ENCODE measurements at regions of chr11 and their contacts with region 1.

Region 1: DNA sequence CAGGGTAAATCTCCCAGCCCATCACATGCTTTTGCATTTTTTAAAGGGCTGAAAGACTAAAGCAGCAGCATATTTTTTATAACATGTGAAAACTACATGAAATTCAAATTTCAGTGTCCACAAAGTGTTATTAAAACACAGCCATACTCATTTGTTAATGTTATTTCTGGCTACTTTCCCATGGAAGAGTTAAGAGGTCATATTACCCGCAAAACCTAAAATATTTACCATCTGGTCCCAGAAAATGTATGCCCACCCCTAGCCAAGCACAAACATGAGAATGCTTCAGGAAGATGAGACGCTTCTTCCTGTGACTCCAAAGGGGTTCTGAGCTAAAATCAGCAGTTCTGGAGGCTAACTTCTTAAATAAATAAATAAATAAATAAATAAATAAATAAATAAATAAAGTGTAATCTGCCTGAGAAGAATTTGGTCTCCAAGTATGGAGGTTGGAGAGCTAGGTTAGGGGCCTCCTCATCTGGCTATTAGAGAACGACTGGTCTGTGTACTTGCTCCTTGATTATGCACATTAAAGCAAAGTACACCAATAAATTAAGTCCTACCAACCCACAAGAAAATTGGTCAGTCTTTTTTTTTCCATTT is 9.7 kb downstream of the IMMP1L start:
- DNase-seq: no peak
- H3K4me3 ChIP-seq: no peak overlapping the region
- H3K27ac ChIP-seq: no peak overlapping the region
- H3K4me1 ChIP-seq: no peaks in the 10 kb centered on the region
- H3K27me3 ChIP-seq: no peaks in the 10 kb centered on the region
- CTCF ChIP-seq: no peak
- POLR2A ChIP-seq: no peak

Region 2: GRCh38 chr11:31110830-31111229 is 388.8 kb before region 1 on chr11:
- intact Hi-C with region 1: no loop called
- DNase-seq: no peak
- H3K4me3 ChIP-seq: no peak overlapping the region
- H3K27ac ChIP-seq: no peak overlapping the region
- H3K4me1 ChIP-seq: no peaks in the 10 kb centered on the region
- H3K27me3 ChIP-seq: no peaks in the 10 kb centered on the region
- CTCF ChIP-seq: no peak
- POLR2A ChIP-seq: no peak

Region 3: DNA sequence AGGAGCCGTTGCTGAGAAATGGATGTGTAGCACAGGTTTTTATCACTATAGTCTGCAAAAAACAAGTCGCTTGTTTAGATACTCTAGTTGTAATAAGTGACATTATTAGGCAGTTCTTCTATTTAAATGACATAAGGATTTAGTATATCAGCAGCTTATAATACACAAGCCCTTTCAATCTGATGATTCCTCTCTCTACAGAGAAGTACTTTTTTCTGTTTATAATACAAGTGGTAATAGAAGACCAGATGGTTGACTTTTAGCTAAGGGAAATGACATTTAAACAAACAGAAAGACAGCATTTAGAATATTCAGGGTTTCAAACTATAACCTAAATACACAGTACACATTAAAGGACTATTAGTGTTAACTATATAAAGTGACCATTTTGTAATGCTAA is 50.6 kb before region 1 on chr11:
- intact Hi-C with region 1: loop called (anchors 2 kb)
- DNase-seq: no peak
- H3K4me3 ChIP-seq: no peak overlapping the region
- H3K27ac ChIP-seq: no peak overlapping the region
- H3K4me1 ChIP-seq: no peaks in the 10 kb centered on the region
- H3K27me3 ChIP-seq: no peaks in the 10 kb centered on the region
- CTCF ChIP-seq: no peak
- POLR2A ChIP-seq: no peak

Region 4: DNA sequence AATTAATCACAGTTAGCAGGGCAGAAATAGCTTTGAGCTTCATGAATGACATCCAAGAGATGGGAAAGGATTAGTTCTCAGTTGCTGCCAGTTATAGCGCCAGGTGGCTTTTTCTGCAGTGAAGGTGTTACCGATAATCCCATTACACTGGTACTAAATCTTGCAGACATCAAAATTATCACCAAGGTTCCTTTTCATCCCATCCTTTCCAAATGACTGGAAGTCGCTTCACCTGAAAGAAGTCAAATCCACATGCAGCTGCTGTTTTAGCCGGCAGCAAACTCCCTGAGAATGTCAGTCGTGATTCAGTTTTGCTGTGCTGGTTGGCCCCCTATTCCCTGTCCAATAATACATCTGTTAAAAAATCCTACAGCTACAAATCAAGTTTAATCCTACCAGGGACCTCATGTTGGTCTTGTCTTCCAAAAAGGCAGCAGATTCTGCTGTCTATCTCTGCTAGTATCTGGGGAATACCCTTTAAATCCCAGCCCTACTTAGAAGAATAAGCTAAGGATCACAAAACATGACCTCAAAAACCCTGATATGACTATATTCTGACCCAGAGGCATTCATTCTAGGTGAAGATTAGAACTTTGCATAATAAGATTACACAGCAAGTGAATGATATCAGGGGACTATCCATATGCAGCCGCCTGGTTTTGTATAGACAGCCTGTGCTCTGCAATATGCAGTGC is 22.0 kb before region 1 on chr11:
- intact Hi-C with region 1: no loop called
- DNase-seq: no peak
- H3K4me3 ChIP-seq: no peak overlapping the region
- H3K27ac ChIP-seq: no peak overlapping the region
- H3K4me1 ChIP-seq: no peaks in the 10 kb centered on the region
- H3K27me3 ChIP-seq: no peaks in the 10 kb centered on the region
- CTCF ChIP-seq: no peak
- POLR2A ChIP-seq: no peak

Region 5: DNA sequence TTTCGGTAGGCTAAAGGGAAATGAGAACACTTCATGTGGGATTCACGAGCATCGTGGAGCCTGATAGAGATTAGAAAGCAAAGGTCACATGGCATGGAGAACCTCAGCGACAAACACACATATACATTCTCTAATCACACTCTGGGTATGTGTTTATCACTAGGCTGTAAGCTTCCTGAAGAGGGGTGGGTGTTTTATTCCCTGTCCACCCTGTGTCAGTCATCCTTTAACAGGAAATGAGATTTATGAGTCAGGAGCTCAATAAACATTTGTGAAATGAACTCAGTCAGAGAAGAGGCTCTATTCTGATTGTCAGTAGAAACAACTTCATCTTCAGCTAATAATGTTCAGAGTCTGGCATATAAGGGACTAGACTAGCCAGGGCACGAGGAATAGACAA is 1012.2 kb after region 1 on chr11:
- intact Hi-C with region 1: no loop called
- DNase-seq: no peak
- H3K4me3 ChIP-seq: no peak overlapping the region
- H3K27ac ChIP-seq: no peak overlapping the region
- H3K4me1 ChIP-seq: no peaks in the 10 kb centered on the region
- H3K27me3 ChIP-seq: peaks cover 0 to 6% of the 10 kb centered on the region in 2 donors
- CTCF ChIP-seq: no peak
- POLR2A ChIP-seq: no peak

Measured in breast epithelium (tissue), 4 donors.